ENCODE measurements at regions of chr9 and their contacts with region 1.

Region 1: DNA sequence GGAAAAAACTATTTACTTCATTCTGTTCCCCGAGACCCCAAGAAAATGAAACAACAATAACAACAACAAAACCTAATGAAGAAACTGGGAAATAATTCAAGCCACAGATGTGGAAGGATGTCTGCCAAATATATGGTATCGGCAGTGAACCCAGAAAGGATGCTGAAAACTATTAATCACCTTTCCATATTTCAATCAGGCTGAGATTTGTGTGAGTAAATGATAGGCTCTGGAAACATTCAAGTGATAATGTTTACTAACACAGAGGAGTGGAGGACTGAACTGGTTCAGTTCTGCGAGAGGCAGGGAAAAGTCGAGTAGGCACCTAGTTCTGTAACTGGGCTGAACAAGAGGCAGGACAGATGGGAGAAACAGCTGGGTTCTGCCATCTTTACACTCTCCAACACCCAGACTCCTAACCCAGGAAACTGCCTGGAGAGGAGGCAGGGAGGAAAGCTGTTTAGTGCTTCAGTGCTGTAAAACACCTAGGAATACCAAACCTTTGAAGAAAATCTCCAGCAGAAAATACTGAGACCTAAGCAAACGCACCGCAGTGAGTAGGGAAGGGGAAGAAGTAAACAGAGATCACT is 96.8 kb upstream of the GNA14 start:
- DNase-seq: no peak
- H3K4me3 ChIP-seq: no peak overlapping the region
- H3K27ac ChIP-seq: no peak overlapping the region
- H3K4me1 ChIP-seq: no peaks in the 10 kb centered on the region
- H3K27me3 ChIP-seq: no peaks in the 10 kb centered on the region
- CTCF ChIP-seq: no peak
- POLR2A ChIP-seq: no peak

Region 2: GRCh38 chr9:77663754-77664153 is 81.2 kb before region 1 on chr9:
- intact Hi-C with region 1: loop called (anchors 5 kb)
- DNase-seq: peak; percentile 81
- H3K4me3 ChIP-seq: no peak overlapping the region
- H3K27ac ChIP-seq: peak overlapping the region; percentile 7 to 36
- H3K4me1 ChIP-seq: no peaks in the 10 kb centered on the region
- H3K27me3 ChIP-seq: no peaks in the 10 kb centered on the region
- CTCF ChIP-seq: no peak
- POLR2A ChIP-seq: no peak

Measured in prostate gland (tissue), 2 donors.